Dorsolateral prefrontal cortex (tissue), 120 donors: ENCODE measurements at regions of chr20 and their contacts with region 1.

Region 1: DNA sequence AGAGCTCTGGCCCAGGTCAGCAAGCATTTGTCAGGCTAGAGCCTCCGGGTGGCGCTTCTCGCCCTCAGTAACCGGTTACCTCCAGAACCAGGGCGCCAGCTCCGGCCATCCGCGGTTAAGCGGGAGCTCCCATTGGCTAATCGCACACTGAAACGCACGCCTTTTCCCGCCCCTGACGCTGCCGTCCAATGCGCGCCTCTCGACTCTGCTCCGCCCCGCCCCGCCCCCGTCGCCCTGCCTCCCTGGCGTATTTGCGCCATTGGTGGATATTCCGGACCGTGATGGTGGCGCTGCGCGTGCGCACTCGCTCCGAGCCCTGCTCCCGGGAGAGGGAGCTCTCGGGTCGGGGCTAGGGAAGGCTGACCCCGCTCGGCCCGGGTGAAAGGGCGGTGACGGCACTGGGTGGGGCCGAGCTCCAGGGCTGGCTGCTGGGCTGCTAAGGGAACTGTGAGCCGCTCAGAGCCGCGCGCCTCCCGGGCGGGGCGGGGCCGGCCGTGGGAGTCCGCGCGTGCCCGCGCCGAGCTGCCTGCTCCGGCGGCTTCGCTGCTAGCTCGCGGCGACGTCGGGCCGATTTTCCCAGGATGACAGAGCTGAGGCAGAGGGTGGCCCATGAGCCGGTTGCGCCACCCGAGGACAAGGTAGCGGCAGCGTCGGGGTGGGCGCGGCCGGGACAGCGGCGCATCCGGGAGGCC is at the start of gene CDS2:
- DNase-seq: peak; percentile 99 to 100 (median 100)
- H3K4me3 ChIP-seq: peak within 1 kb of the TSS; percentile 68 to 99 (median 93)
- H3K27ac ChIP-seq: peak within 1 kb of the TSS; percentile 78 to 98 (median 94)
- H3K27me3 ChIP-seq: no peaks in the 10 kb centered on the region
- CTCF ChIP-seq: peak; percentile 50 to 97 (median 86)
- total RNA-seq, gene CDS2: 103 to 195 (median 145) TPM

Region 2: GRCh38 chr20:5171064-5171789 is 44.6 kb after region 1 on chr20:
- intact Hi-C with region 1: loop called in 1 of 2 experiments (anchors 5 kb)
- DNase-seq: peak in 6 of 10 donors; percentile 26 to 77 (median 56)
- H3K4me3 ChIP-seq: peak overlapping the region in 39 of 59 donors; percentile 6 to 50 (median 24)
- H3K27ac ChIP-seq: peak overlapping the region in 57 of 59 donors; percentile 7 to 91 (median 67)
- H3K27me3 ChIP-seq: no peaks in the 10 kb centered on the region
- CTCF ChIP-seq: no peak

Region 3: GRCh38 chr20:5191829-5192569 is 65.3 kb after region 1 on chr20:
- intact Hi-C with region 1: loop called (anchors 1 kb)
- DNase-seq: peak in 2 of 10 donors; percentile 55 to 56
- H3K4me3 ChIP-seq: peak overlapping the region in 1 of 59 donors; percentile 31
- H3K27ac ChIP-seq: peak overlapping the region in 57 of 59 donors; percentile 34 to 93 (median 80)
- H3K27me3 ChIP-seq: no peaks in the 10 kb centered on the region
- CTCF ChIP-seq: peak; percentile 73 to 95 (median 87)